ENCODE measurements at regions of chrX and their contacts with region 1.

Region 1: GRCh38 chrX:101206471-101206870 is 13.1 kb upstream of the DRP2 start:
- DNase-seq: peak; percentile 59
- H3K4me3 ChIP-seq: no peak overlapping the region
- H3K27ac ChIP-seq: no peak overlapping the region
- H3K4me1 ChIP-seq: peaks cover 24% of the 10 kb centered on the region
- CTCF ChIP-seq: peak; percentile 68

Region 2: DNA sequence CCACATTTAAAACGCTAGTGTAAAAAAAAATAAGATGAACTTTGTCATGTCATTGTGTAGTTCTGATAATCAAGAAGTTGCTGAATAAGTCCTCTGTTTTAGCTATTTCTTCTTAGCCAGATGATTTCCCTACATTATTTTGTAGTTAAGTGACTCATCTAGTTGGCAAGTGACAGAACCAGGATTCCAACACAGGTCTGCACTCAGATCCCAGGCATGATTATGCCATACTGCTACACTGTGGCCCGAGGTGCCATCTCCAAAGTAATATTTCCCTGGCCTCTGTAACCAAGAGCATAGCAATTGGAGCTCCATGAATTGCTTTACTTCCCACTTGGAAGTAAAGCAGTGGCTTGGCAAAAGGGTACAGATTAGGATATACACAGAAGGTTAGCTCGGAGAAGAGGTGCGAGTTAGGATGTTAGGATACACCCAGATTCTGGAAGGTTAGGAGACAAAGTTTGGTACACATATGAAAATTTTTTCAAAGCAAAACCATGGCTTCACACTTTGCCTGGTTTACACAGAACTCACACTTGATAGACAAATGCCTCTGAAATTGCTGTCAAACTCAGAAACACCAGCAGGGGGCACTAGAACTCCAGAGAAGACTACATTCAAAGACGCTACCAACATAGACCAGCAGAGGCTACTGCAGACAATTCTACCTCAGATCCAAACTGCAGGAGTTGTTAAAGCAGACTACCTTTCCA is 521.0 kb before region 1 on chrX:
- CTCF ChIA-PET with region 1: no interaction called
- POLR2A ChIA-PET with region 1: no interaction called
- intact Hi-C with region 1: loop called (anchors 5 kb)
- DNase-seq: peak; percentile 76
- H3K4me3 ChIP-seq: no peak overlapping the region
- H3K27ac ChIP-seq: no peak overlapping the region
- H3K4me1 ChIP-seq: peaks cover 21% of the 10 kb centered on the region
- CTCF ChIP-seq: peak; percentile 85

Region 3: GRCh38 chrX:100812216-100813158 is 394.0 kb before region 1 on chrX:
- CTCF ChIA-PET with region 1: no interaction called
- POLR2A ChIA-PET with region 1: no interaction called
- intact Hi-C with region 1: no loop called
- DNase-seq: no peak
- H3K4me3 ChIP-seq: no peak overlapping the region
- H3K27ac ChIP-seq: no peak overlapping the region
- H3K4me1 ChIP-seq: no peaks in the 10 kb centered on the region
- CTCF ChIP-seq: no peak

Region 4: DNA sequence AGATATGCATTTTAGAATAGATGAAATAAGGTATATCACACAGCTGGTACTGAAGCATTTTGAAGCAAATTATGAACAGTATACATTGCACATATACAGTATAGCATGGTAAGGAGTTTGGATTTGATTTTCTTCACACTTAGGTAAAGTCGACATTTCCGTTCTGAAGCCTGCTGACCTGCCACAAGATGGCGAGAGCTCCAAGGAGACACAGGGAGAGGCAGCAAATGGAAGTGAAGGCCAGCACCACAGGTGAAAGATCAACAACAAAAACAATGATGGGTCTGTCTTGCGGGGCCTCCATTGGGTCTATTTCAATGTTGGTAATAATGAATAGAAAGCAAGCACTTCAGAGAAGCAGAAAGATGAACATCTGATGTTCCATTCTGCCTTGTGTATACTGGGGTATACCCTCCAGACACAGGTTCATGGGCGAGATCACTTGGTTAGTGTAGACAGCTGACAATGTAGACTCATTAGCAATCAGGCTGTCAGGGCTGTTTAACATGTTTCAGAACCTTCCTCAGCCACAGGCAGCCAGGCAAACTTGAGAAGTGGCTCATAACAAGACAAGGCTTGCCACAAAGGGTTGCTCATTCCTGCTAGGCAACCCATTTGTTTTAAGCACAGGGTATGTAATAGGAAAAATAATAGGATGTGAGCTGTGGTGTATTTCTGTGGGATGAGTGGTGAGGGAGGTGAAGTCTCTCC is 311.0 kb before region 1 on chrX:
- CTCF ChIA-PET with region 1: no interaction called
- POLR2A ChIA-PET with region 1: no interaction called
- intact Hi-C with region 1: loop called (anchors 1 kb)
- DNase-seq: peak; percentile 67
- H3K4me3 ChIP-seq: no peak overlapping the region
- H3K27ac ChIP-seq: no peak overlapping the region
- H3K4me1 ChIP-seq: peaks cover 7% of the 10 kb centered on the region
- CTCF ChIP-seq: peak; percentile 83

Region 5: GRCh38 chrX:101530944-101531343 is 324.5 kb after region 1 on chrX:
- CTCF ChIA-PET with region 1: no interaction called
- POLR2A ChIA-PET with region 1: interaction called, 14 read pairs
- intact Hi-C with region 1: no loop called
- DNase-seq: no peak
- H3K4me3 ChIP-seq: no peak overlapping the region
- H3K27ac ChIP-seq: no peak overlapping the region
- H3K4me1 ChIP-seq: no peaks in the 10 kb centered on the region
- CTCF ChIP-seq: no peak

Measured in OCI-LY7 (cell line).